Left ventricle myocardium inferior (tissue), 1 donor: ENCODE measurements at regions of chr12 and their contacts with region 1.

Region 1: DNA sequence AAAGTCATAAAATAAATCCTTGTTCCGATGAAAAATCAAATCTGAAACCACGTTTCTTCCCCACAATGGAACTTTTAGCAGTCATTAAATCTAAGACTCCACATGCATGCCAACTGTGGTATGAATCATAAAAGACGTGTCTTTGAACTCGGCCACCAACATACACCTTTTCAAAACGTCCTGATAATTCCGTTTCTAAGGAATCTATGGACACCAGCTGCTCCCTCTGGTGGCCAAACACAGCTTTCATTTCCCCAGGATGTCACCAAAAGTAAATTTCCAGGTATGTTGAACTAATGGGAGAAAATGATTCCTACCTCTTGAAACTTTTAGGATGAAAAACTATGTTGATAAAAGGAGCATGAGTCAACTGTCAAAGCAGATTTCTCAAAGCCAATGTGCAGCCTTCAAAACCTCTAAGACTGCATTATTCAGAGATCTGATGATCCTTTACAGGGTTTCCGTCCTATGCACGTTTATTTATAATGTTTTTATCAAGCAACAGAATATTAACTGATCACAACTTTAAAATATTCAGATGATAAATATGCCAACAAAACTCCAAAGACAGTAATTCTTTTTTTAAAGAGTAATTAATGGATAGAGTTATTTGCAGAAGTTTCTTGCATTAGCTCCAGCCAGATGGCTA is 96.2 kb downstream of the CIT start:
- DNase-seq: no peak
- H3K4me3 ChIP-seq: no peak overlapping the region
- H3K27ac ChIP-seq: no peak overlapping the region
- H3K4me1 ChIP-seq: no peaks in the 10 kb centered on the region
- H3K27me3 ChIP-seq: no peaks in the 10 kb centered on the region
- CTCF ChIP-seq: peak; percentile 83

Region 2: DNA sequence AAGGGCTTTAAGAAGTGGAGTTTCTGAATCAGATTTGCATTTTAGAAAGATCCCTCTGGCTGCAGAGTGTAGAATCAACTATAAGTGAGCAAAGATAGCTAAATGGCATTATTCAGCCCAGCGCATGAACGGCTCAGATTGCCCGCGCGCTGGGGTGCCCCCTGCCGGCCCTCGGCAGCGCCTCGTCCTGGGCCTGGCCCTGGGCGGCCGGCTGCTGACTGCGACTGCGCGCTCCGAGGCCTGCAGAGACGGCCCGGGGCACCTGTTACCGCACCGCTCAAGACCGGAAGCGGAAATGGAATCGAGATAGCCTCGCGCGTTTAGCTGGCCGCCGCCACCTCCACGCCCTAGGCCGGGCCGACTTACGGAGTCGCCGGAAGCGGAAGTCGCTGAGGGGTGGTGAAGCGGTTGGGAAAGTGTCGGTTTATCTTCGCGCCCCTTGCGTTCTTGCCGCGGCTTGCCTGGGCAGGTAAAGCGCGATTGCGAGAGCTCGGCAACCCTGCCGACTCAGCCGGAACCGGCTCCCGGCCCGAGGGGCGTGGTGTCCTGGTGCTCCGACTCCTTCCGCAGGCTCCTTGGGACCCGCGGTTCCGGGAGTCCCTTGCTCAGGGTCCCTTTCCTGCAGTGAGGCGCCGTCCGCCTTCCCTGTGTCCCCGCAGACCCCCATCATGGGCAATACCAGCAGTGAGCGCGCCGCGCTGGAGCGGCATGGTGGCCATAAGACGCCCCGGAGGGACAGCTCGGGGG is 113.2 kb before region 1 on chr12 and contains the start of gene PRKAB1:
- intact Hi-C with region 1: loop called (anchors 5 kb)
- DNase-seq: peak; percentile 95
- H3K4me3 ChIP-seq: peak within 1 kb of the TSS; percentile 86
- H3K27ac ChIP-seq: peak within 1 kb of the TSS; percentile 92
- H3K4me1 ChIP-seq: peaks cover 66% of the 10 kb centered on the region
- H3K27me3 ChIP-seq: no peaks in the 10 kb centered on the region
- CTCF ChIP-seq: peak; percentile 98
- total RNA-seq, gene PRKAB1: 9.2 TPM

Region 3: DNA sequence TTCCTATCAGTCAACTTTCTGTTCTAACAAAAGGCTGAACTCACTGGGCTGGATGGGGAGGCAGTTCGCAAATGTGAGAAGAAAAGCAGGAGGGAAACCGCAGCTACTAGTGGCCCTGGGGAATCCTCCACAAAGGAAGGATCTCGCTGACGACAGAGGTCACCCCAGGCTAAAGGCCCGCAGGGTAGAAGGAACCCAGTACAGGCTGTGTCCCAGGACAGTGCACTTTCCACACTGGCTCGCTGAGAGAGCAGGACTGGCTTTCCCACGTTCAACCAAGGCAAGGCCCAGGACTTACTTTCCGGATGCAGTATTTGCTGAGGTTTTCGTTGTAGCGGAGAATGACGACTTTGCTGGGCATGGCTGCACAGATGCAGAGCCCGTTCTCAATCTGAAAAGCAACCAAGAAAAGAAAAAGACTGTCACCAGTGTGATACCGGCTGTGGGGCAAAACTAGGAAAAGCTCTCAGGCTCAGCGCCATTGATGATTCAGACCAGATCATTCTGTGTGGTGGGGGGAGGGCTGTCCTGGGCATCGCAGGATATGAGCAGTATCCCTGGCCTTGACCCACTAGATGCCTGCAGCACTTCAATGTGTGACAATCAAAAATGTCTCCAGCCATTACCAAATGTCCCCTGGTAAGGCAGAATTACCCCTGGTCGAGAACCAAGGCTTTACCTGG is 76.7 kb before region 1 on chr12:
- intact Hi-C with region 1: loop called (anchors 2 kb)
- DNase-seq: peak; percentile 55
- H3K4me3 ChIP-seq: no peak overlapping the region
- H3K27ac ChIP-seq: peak overlapping the region; percentile 83
- H3K4me1 ChIP-seq: peaks cover 17% of the 10 kb centered on the region
- H3K27me3 ChIP-seq: no peaks in the 10 kb centered on the region
- CTCF ChIP-seq: no peak

Region 4: GRCh38 chr12:119727600-119728443 is 53.1 kb before region 1 on chr12:
- intact Hi-C with region 1: no loop called
- DNase-seq: no peak
- H3K4me3 ChIP-seq: no peak overlapping the region
- H3K27ac ChIP-seq: no peak overlapping the region
- H3K4me1 ChIP-seq: no peaks in the 10 kb centered on the region
- H3K27me3 ChIP-seq: no peaks in the 10 kb centered on the region
- CTCF ChIP-seq: no peak